ENCODE measurements at regions of chr13 and their contacts with region 1.

Region 1: GRCh38 chr13:54078271-54078870 is 1049.8 kb downstream of the OLFM4 start:
- DNase-seq: no peak
- ATAC-seq: no peak
- H3K4me3 ChIP-seq: no peak overlapping the region
- H3K27ac ChIP-seq: no peak overlapping the region
- H3K4me1 ChIP-seq: no peaks in the 10 kb centered on the region
- H3K27me3 ChIP-seq: no peaks in the 10 kb centered on the region
- CTCF ChIP-seq: no peak
- POLR2A ChIP-seq: no peak

Region 2: DNA sequence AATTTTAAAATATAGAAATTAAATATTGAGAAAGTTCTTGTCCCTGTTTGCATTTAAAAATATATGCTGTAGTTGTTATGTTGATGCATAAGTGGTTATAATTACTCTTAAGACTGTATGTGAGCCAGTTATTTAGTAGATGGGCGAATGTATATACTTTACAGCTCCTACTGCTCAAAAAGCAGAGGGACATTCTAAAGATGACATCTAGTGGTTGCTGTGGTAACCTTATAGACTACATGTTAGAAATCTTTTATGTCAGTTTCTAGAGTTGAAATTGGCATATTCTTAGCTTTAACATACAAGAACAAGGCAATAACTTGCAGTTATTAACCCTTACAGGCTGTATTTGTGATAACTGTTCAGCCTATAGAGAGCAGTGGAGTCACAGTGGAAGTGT is 889.2 kb before region 1 on chr13:
- in situ Hi-C with region 1: no loop called
- intact Hi-C with region 1: loop called (anchors 10 kb)
- DNase-seq: no peak
- ATAC-seq: no peak
- H3K4me3 ChIP-seq: no peak overlapping the region
- H3K27ac ChIP-seq: no peak overlapping the region
- H3K4me1 ChIP-seq: no peaks in the 10 kb centered on the region
- H3K27me3 ChIP-seq: no peaks in the 10 kb centered on the region
- CTCF ChIP-seq: no peak
- POLR2A ChIP-seq: no peak